Activated B cell treated with CpG ODN at 0.5 μM for 24 hours (primary cell): ENCODE measurements at regions of chr1 and their contacts with region 1.

Region 1: GRCh38 chr1:172826096-172826743 is 167.3 kb downstream of the FASLG start:
- DNase-seq: no peak
- ATAC-seq: peak; percentile 62
- H3K4me3 Mint-ChIP-seq: no peak overlapping the region
- H3K27ac Mint-ChIP-seq: no peak overlapping the region
- H3K4me1 Mint-ChIP-seq: peaks cover 2% of the 10 kb centered on the region
- H3K27me3 Mint-ChIP-seq: no peaks in the 10 kb centered on the region
- CTCF ChIP-seq: no peak

Region 2: DNA sequence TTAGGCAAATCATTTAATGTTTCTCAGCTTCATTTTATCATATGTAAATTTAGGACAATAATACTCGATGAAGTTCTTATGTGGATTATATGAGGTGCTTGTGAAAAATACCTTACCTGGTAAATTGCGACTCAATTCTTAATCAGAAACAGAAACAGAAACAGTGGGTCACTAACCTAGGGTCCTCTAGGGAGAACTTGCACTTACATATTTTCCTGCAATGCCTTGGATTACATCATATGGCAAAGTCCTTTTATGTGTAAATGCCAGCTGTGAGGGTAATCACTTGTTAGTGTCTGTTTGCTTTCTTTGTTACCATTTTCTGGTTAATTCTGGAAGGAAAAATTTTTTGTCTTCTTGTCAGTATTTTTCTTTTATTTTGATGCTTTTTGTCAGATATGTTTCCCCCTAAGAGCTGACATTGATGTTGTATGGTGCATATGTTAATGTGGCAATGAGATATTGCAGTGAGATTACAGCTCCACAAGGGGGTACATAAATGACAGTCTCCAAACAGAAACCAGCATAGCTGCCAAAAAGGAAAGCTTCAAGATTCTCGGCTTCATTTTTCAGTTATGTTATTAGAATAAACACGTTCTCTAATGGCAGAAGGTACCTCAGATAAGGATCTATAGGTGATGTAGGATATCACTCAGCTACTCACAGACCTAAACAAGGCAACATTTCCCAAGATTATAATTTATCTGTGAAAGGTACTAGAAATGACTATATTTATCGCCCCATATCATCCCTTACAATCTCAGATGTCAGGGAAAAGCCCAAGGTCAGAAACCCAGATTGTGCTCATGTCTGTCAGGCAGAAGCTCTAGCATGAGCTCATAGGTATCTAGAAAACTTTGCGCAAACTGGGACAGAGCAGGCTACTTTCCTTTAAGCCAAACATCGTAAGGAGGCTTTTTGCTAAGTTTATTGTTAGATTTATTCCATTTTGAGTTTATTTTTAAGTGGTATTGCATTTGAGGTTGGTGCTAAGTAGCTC is 47.5 kb before region 1 on chr1:
- CTCF ChIA-PET with region 1: interaction called, 18 read pairs
- POLR2A ChIA-PET with region 1: no interaction called
- intact Hi-C with region 1: no loop called
- DNase-seq: no peak
- ATAC-seq: peak; percentile 82
- H3K4me3 Mint-ChIP-seq: no peak overlapping the region
- H3K27ac Mint-ChIP-seq: no peak overlapping the region
- H3K4me1 Mint-ChIP-seq: peaks cover 29% of the 10 kb centered on the region
- H3K27me3 Mint-ChIP-seq: no peaks in the 10 kb centered on the region
- CTCF ChIP-seq: no peak

Region 3: DNA sequence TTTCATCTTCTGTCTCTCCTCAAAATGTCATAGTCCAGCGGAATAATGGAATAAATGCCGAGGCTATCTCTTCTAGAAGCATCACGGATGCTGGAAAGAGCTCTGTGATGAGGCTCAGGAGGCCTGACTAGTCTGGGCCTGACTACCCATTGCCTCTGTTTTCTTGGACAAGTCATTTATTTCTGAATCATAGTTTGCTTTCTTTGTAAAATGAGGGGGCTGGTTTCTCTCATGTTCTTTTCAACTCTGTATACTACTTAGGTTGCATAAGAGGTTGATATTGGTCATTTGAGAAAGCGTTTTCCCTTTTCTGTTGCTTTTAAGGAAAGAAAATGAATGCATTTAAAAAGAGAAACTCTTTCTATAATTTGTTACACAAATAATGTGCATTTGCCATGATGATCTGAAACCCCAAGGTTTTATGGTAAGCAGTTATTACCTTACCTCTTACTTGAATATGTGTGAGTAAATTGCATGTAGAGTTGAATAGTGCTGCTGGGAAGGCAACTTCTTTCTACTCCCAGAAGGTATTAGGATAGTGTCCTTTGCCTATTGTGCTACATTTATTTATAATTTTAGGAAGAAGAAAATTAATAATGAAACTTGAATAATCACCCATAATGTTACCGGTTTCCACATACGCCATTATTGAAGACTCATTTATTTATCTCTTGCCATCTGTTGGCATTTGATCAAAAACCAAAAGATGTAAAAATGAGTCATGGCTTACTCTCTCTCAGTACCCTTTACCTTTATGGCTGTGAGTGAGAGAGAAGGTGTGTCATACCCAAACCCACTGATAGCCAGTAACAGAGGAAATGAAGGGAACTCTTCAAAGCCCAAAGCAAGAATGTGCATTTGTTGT is 11.8 kb after region 1 on chr1:
- CTCF ChIA-PET with region 1: interaction called, 11 read pairs
- POLR2A ChIA-PET with region 1: no interaction called
- intact Hi-C with region 1: no loop called
- DNase-seq: no peak
- ATAC-seq: peak; percentile 54
- H3K4me3 Mint-ChIP-seq: no peak overlapping the region
- H3K27ac Mint-ChIP-seq: no peak overlapping the region
- H3K4me1 Mint-ChIP-seq: peaks cover 1% of the 10 kb centered on the region
- H3K27me3 Mint-ChIP-seq: peaks cover 4% of the 10 kb centered on the region
- CTCF ChIP-seq: no peak

Region 4: DNA sequence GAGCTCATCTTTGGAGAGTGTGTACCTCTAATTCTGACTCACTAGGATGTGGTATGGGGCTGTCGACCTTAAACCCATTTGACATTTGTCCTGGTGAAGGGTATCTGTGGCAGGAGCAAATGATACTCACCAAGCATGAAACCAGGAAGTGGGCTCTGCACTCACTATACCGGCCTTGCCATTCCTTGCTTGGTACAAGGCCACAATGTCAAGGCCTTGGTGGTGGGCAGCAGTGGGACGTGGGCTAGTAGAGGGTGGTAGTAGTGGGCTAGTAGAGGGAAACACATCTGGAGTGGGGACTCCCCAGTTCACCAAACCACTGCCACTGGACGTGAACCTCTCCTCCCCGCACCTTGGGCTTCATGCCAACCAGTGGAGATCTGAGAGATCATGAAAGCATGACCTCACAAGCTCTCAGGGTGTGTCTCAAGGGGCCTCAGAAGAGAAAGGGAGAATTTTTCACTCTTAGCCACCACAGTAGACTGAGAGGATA is 369.4 kb after region 1 on chr1:
- CTCF ChIA-PET with region 1: interaction called, 174 read pairs
- POLR2A ChIA-PET with region 1: no interaction called
- intact Hi-C with region 1: no loop called
- DNase-seq: peak; percentile 31
- ATAC-seq: peak; percentile 93
- H3K4me3 Mint-ChIP-seq: peak overlapping the region; percentile 61
- H3K27ac Mint-ChIP-seq: peak overlapping the region; percentile 88
- H3K4me1 Mint-ChIP-seq: peaks cover 36% of the 10 kb centered on the region
- H3K27me3 Mint-ChIP-seq: no peaks in the 10 kb centered on the region
- CTCF ChIP-seq: no peak

Region 5: GRCh38 chr1:173202430-173203145 is 376.4 kb after region 1 on chr1:
- CTCF ChIA-PET with region 1: interaction called, 174 read pairs
- POLR2A ChIA-PET with region 1: interaction called, 9 read pairs
- intact Hi-C with region 1: loop called (anchors 1 kb)
- DNase-seq: no peak
- ATAC-seq: no peak
- H3K4me3 Mint-ChIP-seq: no peak overlapping the region
- H3K27ac Mint-ChIP-seq: no peak overlapping the region
- H3K4me1 Mint-ChIP-seq: peaks cover 50% of the 10 kb centered on the region
- H3K27me3 Mint-ChIP-seq: no peaks in the 10 kb centered on the region
- CTCF ChIP-seq: no peak

Region 6: GRCh38 chr1:173758980-173759609 is 932.9 kb after region 1 on chr1:
- CTCF ChIA-PET with region 1: no interaction called
- POLR2A ChIA-PET with region 1: no interaction called
- intact Hi-C with region 1: no loop called
- DNase-seq: no peak
- ATAC-seq: no peak
- H3K4me3 Mint-ChIP-seq: no peak overlapping the region
- H3K27ac Mint-ChIP-seq: no peak overlapping the region
- H3K4me1 Mint-ChIP-seq: no peaks in the 10 kb centered on the region
- H3K27me3 Mint-ChIP-seq: no peaks in the 10 kb centered on the region
- CTCF ChIP-seq: no peak